Body of pancreas (tissue), 4 donors: ENCODE measurements at regions of chr2 and their contacts with region 1.

Region 1: DNA sequence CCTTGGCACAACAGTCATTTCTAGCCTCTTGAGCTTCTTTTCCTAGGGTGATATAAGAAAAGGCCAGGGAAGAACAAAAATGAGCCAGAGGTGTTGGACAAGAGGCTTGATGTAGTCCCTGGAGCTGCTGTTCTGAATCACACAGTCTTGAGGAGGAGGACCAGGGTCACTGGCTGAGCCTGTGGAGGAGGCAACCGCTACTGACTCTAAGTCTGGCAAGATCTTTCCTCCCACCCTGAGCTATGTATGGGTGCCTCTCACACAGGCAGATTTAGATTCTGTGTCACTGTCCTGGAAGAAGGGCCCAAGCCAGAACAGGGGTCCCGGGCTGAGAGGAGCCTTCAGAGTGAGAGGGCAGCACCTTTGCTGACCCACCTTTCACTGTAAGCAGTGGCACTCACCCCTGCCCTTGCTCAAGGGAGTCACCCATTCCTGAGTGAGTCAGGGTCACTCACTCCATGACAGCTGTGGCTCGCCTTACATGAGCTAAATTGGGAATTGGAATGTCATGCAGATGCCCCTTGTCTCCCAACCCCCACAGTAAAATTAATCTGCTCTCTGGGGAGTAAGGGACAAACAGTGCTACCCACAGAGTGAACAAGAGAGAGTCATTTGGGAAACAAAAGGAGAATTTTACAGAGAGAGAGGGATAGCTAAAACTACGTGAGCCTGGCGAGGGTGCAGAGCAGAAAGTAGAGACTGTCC is at the start of gene TRIM54:
- DNase-seq: no peak
- ATAC-seq: no peak
- H3K4me3 ChIP-seq: no peak within 1 kb of the TSS
- H3K27ac ChIP-seq: no peak within 1 kb of the TSS
- H3K4me1 ChIP-seq: no peaks in the 10 kb centered on the region
- H3K27me3 ChIP-seq: peaks cover 0 to 4% of the 10 kb centered on the region in 2 donors
- CTCF ChIP-seq: no peak
- POLR2A ChIP-seq: no peak
- total RNA-seq, gene TRIM54: 0.26 TPM in 1 of 2 donors, not detected in the other

Region 2: GRCh38 chr2:27102329-27102728 is 179.7 kb before region 1 on chr2:
- intact Hi-C with region 1: loop called (anchors 5 kb)
- DNase-seq: no peak
- ATAC-seq: no peak
- H3K4me3 ChIP-seq: no peak overlapping the region
- H3K27ac ChIP-seq: no peak overlapping the region
- H3K4me1 ChIP-seq: no peaks in the 10 kb centered on the region
- H3K27me3 ChIP-seq: no peaks in the 10 kb centered on the region
- CTCF ChIP-seq: no peak
- POLR2A ChIP-seq: no peak